Activated CD4-positive, alpha-beta memory T cell treated with anti-CD3 and anti-CD28 coated beads for 36 hours (primary cell): ENCODE measurements at regions of chr3 and their contacts with region 1.

Region 1: GRCh38 chr3:56251343-56251945 is 216.8 kb downstream of the ERC2 start:
- DNase-seq: peak; percentile 16
- H3K4me3 Mint-ChIP-seq: no peak overlapping the region
- H3K27ac Mint-ChIP-seq: no peak overlapping the region
- H3K4me1 Mint-ChIP-seq: no peaks in the 10 kb centered on the region
- H3K27me3 Mint-ChIP-seq: no peaks in the 10 kb centered on the region

Region 2: DNA sequence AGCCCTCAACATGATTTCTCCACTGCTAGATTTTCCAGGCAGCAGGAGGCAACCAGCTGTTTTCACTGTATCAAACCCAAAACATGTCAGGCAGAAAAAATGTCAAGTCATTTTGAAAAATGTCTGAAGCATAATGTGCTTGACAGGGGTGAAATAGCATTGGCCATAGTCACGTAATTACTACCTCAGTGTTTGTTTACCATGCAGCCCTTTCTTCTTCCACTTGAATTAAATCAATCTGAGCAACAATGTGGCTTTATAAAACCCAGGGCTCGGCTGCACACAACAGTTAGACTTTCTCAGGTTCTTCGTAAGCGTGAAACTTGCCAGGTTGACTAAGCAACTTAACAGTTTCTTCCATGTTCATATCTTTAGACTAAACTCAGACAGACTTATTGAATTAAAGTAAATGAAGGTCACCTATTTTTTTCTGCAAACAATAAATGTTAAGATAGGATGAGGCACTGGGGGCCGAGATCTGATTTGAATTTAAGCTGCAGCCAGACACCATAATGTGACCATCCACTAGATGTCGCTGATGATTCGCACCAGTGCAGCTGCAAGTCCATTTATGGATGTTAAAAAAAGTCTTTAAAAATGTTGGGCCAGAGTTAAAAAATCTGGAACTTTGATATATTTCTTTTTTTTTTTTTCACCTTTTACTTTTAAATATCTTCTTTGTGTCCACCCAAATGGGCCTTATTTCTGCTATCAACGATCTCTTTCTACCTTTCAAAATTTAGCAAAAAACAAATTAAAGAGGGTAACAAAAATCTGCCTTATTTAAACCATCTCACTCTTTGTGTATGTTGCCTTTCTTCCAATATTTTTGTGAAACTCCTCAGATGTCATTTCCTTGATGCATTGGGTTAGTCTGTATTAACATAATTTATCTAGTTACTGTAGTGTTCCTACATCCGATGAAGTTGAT is 1823.2 kb before region 1 on chr3:
- CTCF ChIA-PET with region 1: no interaction called
- POLR2A ChIA-PET with region 1: no interaction called
- intact Hi-C with region 1: loop called (anchors 5 kb)
- DNase-seq: peak; percentile 50
- H3K4me3 Mint-ChIP-seq: no peak overlapping the region
- H3K27ac Mint-ChIP-seq: no peak overlapping the region
- H3K4me1 Mint-ChIP-seq: no peaks in the 10 kb centered on the region
- H3K27me3 Mint-ChIP-seq: no peaks in the 10 kb centered on the region

Region 3: DNA sequence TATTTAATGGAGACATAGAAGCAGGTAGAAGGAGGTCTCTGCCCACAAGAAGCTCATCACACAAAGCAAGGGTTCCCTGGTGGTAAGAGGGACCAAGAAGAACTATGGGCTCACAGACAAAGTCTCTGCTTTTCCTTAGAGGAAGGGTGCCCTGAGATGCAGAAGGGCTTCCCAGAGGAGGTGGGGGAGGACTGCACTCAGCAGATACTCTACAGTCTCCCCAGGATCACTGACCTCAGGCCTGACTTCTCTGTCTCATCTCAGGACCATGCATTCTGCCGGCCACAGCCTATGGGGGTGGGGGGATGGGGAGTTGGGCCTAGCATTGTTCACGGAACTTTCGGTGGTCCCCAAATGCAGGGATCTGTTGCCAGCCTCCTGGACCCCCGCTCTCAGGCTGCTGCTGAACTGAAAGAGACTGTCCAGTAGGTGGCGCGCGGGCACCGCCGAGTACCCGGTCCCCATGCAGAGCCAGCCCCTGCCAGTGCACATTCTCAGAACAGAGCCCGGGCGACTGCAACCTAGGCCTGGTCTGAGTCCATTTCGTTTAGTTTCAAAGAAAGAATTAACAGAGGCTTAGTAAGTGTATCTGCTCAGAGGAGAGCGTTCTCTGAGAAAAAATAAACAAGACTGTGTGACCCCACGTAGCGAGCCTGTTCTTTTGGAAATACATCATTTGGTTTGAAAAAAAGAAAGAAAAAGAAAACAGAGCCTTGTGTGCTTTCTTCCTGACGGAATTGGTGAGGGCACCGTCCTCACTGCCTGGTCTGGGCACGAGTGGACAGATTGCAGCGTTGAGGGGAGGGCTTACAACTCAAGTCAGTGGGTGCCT is 1397.7 kb before region 1 on chr3:
- CTCF ChIA-PET with region 1: no interaction called
- POLR2A ChIA-PET with region 1: no interaction called
- intact Hi-C with region 1: loop called (anchors 10 kb)
- DNase-seq: peak; percentile 51
- H3K4me3 Mint-ChIP-seq: no peak overlapping the region
- H3K27ac Mint-ChIP-seq: no peak overlapping the region
- H3K4me1 Mint-ChIP-seq: no peaks in the 10 kb centered on the region
- H3K27me3 Mint-ChIP-seq: peaks cover 10% of the 10 kb centered on the region

Region 4: GRCh38 chr3:55434789-55435188 is 816.7 kb before region 1 on chr3:
- CTCF ChIA-PET with region 1: no interaction called
- POLR2A ChIA-PET with region 1: no interaction called
- intact Hi-C with region 1: loop called (anchors 5 kb)
- DNase-seq: peak; percentile 10
- H3K4me3 Mint-ChIP-seq: no peak overlapping the region
- H3K27ac Mint-ChIP-seq: no peak overlapping the region
- H3K4me1 Mint-ChIP-seq: no peaks in the 10 kb centered on the region
- H3K27me3 Mint-ChIP-seq: no peaks in the 10 kb centered on the region

Region 5: DNA sequence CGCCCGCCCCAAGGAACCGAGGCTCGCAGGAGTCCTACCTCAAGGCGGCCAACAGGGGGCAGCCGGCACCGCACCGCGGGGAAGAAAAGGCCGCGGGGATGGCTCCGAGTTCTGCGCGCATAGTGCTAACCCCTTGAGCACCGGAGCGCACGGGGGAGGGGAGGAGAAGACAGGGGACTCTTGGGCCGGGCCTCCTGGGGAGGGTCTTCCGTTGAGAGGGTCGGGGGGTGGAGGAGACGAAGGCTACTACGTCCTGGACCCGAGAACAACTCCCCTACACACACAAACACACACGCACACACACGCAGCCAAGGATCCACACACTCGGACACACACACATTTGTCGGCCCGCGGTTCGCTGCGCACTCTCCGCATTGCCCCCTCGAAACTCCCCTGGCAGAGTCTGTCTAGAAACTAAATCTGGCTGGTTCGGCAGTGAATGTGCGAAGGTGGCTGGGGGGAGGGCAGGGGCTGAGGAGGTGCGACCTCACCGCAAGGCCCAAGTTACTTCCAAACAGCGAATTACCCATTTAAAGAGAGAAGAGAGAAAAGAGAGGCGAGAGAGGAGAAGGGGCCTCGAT is 766.1 kb before region 1 on chr3:
- CTCF ChIA-PET with region 1: no interaction called
- POLR2A ChIA-PET with region 1: no interaction called
- intact Hi-C with region 1: loop called (anchors 2 kb)
- DNase-seq: peak; percentile 59
- H3K4me3 Mint-ChIP-seq: no peak overlapping the region
- H3K27ac Mint-ChIP-seq: no peak overlapping the region
- H3K4me1 Mint-ChIP-seq: peaks cover 17% of the 10 kb centered on the region
- H3K27me3 Mint-ChIP-seq: peaks cover 77% of the 10 kb centered on the region

Region 6: DNA sequence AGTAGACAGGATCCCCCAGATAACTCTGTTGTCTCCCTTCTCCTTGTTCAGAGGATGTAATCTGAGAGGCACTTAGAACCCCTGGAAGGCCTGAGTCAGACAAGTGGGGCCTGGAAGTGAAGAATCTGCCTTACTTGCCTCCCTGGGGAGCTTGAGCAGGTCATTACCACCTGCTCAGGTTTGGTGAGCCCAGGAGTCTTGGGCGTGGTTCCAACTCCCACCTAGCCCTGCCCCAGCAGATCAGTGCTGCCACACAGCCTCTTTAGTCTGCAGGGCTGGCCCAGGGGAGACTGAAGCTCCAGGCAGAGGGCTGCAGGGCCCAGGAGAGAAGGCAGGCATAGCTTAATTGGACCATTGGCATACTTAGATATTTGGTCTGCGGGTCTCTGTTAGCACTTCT is 13.1 kb before region 1 on chr3:
- CTCF ChIA-PET with region 1: interaction called, 12 read pairs
- POLR2A ChIA-PET with region 1: no interaction called
- intact Hi-C with region 1: no loop called
- DNase-seq: no peak
- H3K4me3 Mint-ChIP-seq: no peak overlapping the region
- H3K27ac Mint-ChIP-seq: no peak overlapping the region
- H3K4me1 Mint-ChIP-seq: no peaks in the 10 kb centered on the region
- H3K27me3 Mint-ChIP-seq: peaks cover 2% of the 10 kb centered on the region